ENCODE measurements at regions of chr11 and their contacts with region 1.

Region 1: DNA sequence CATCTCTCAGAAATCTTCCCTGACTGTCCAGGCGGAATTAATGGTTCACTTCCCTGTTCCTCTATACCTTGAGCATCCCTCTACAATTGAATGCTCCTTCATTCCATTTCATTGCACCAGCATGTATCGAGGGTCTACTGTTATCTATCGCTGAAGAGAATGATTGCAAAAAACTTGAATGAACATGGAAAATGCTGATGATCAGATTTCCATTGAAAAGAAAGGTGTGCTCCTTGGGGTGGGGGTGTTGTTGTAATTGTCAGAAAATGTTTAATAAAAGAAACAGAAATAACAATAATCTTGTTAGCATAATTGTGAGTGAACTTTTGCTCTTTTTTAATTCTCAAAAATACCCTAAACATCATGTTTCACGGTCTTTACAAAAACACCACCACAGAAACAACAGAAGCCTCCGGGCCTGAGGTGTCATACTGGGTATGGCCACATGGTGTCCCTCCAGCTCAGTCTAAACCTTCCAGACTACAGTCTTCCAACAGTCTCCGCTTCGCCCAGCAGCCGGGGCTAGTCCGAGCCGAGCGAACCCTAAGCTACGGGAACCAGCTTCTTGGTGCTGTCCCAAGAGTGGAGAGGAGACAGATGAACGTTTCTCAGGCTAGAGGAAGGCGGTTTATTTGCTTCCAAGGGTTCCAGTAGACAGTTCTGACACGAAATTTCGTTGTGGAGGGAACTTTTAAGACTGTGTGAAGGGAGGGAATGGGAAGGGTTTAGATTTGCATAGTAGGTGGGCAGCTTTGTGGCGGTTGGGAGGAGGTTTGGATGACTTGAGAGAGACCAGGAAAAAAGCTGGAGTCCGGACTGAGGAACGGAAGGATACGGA is 75.8 kb upstream of the ZBED5 start:
- DNase-seq: peak; percentile 92 to 95
- H3K4me3 ChIP-seq: peak overlapping the region; percentile 27
- H3K4me3 Mint-ChIP-seq: peak overlapping the region; percentile 85
- H3K27ac Mint-ChIP-seq: peak overlapping the region; percentile 64
- H3K4me1 ChIP-seq: peaks cover 16% of the 10 kb centered on the region
- H3K4me1 Mint-ChIP-seq: peaks cover 22% of the 10 kb centered on the region
- H3K27me3 ChIP-seq: no peaks in the 10 kb centered on the region
- H3K27me3 Mint-ChIP-seq: no peaks in the 10 kb centered on the region
- CTCF ChIP-seq: peak; percentile 93 to 97

Region 2: GRCh38 chr11:10808553-10809372 is 124.9 kb before region 1 on chr11 and contains the start of gene EIF4G2:
- CTCF ChIA-PET with region 1: interaction called, 25 read pairs
- POLR2A ChIA-PET with region 1: interaction called, 39 read pairs
- intact Hi-C with region 1: loop called (anchors 2 kb)
- DNase-seq: peak; percentile 98 to 99
- H3K4me3 ChIP-seq: peak within 1 kb of the TSS; percentile 92
- H3K4me3 Mint-ChIP-seq: peak within 1 kb of the TSS; percentile 98
- H3K27ac Mint-ChIP-seq: peak within 1 kb of the TSS; percentile 97
- H3K4me1 ChIP-seq: peaks cover 11% of the 10 kb centered on the region
- H3K4me1 Mint-ChIP-seq: peaks cover 11% of the 10 kb centered on the region
- H3K27me3 ChIP-seq: no peaks in the 10 kb centered on the region
- H3K27me3 Mint-ChIP-seq: no peaks in the 10 kb centered on the region
- CTCF ChIP-seq: no peak
- total RNA-seq, gene EIF4G2: 1,233 and 1,287 TPM in 2 replicates

Region 3: GRCh38 chr11:10893714-10894151 is 39.9 kb before region 1 on chr11:
- CTCF ChIA-PET with region 1: interaction called, 13 read pairs
- POLR2A ChIA-PET with region 1: interaction called, 4 read pairs
- intact Hi-C with region 1: no loop called
- DNase-seq: peak; percentile 63 to 78
- H3K4me3 ChIP-seq: no peak overlapping the region
- H3K4me3 Mint-ChIP-seq: no peak overlapping the region
- H3K27ac Mint-ChIP-seq: peak overlapping the region; percentile 77
- H3K4me1 ChIP-seq: peaks cover 32% of the 10 kb centered on the region
- H3K4me1 Mint-ChIP-seq: peaks cover 32% of the 10 kb centered on the region
- H3K27me3 ChIP-seq: no peaks in the 10 kb centered on the region
- H3K27me3 Mint-ChIP-seq: no peaks in the 10 kb centered on the region
- CTCF ChIP-seq: peak; percentile 21 to 52

Region 4: DNA sequence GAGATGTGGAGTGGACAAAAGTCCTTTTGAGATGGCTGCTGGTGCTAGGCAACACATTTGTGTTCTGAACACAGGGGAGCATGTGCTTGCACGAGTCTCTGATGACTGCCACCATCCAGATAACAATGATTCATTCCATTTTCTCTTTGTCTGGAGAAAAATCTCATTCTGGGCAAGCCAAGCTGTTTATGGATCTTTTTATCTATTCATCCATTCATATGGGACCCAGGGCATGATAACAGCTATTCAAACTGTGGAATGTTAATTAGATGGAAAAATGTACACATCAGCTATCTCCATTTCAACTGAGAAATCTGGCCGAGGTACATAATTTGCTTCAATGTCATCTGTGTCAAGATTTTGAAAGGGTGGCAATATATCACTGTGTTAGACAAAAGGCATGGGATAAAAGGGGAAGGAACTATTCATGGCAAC is 41.6 kb after region 1 on chr11:
- CTCF ChIA-PET with region 1: interaction called, 39 read pairs
- POLR2A ChIA-PET with region 1: interaction called, 4 read pairs
- intact Hi-C with region 1: loop called (anchors 1 kb)
- DNase-seq: peak; percentile 77 to 80
- H3K4me3 ChIP-seq: no peak overlapping the region
- H3K4me3 Mint-ChIP-seq: peak overlapping the region; percentile 40
- H3K27ac Mint-ChIP-seq: peak overlapping the region; percentile 67
- H3K4me1 ChIP-seq: peaks cover 48% of the 10 kb centered on the region
- H3K4me1 Mint-ChIP-seq: peaks cover 32% of the 10 kb centered on the region
- H3K27me3 ChIP-seq: no peaks in the 10 kb centered on the region
- H3K27me3 Mint-ChIP-seq: no peaks in the 10 kb centered on the region
- CTCF ChIP-seq: no peak

Region 5: DNA sequence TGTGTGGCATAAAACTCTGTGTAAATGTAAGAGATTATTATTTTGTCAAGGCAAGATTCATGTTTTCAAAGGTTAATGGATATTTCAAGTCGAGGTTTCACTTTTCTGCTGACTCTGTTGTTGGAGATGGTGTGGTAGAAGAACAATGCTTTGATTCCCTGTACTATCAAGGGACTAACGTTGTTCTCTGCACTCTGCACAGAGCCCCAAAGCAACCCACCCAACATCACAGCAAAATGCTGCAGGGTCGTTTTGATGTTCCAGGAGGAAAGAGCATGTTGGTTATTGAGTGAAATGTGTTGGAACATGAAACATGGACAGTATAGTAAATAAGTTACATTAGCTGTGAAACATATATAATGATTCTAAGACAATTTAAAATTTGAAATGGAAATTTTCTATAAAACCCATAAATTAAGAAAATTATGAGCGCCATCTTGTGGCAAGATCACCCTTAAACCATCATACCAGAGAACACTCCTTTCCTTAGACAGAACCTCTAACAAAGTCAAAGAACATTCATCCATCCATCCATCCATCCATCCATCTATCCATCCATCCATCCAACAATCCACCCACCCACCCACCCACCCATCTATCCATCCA is 88.6 kb after region 1 on chr11:
- CTCF ChIA-PET with region 1: interaction called, 133 read pairs
- POLR2A ChIA-PET with region 1: interaction called, 5 read pairs
- intact Hi-C with region 1: loop called (anchors 1 kb)
- DNase-seq: peak in 1 of 2 experiments; percentile 29
- H3K4me3 ChIP-seq: no peak overlapping the region
- H3K4me3 Mint-ChIP-seq: no peak overlapping the region
- H3K27ac Mint-ChIP-seq: no peak overlapping the region
- H3K4me1 ChIP-seq: no peaks in the 10 kb centered on the region
- H3K4me1 Mint-ChIP-seq: peaks cover 6% of the 10 kb centered on the region
- H3K27me3 ChIP-seq: no peaks in the 10 kb centered on the region
- H3K27me3 Mint-ChIP-seq: no peaks in the 10 kb centered on the region
- CTCF ChIP-seq: peak; percentile 29 to 67

Region 6: DNA sequence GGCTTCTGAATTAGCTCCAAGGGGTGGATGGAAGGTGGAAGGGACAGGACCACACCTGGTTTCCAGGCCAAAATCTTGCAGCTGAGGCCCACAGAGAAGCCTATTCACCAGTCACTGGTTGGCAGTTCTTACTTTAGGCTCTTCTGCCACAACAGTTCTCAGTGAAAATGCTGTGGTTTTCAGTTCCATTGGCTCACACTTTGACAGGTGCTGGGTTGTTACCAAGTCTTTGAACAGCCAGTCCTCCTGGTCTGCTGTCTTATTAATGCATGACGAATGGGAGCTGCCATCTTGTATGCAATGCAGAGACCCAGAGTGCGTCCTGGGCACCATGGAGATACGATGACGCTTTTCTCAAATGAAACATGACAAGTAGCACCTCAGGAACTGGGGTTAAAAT is 156.1 kb after region 1 on chr11:
- CTCF ChIA-PET with region 1: no interaction called
- POLR2A ChIA-PET with region 1: no interaction called
- intact Hi-C with region 1: no loop called
- DNase-seq: no peak
- H3K4me3 ChIP-seq: no peak overlapping the region
- H3K4me3 Mint-ChIP-seq: no peak overlapping the region
- H3K27ac Mint-ChIP-seq: no peak overlapping the region
- H3K4me1 ChIP-seq: no peaks in the 10 kb centered on the region
- H3K4me1 Mint-ChIP-seq: no peaks in the 10 kb centered on the region
- H3K27me3 ChIP-seq: no peaks in the 10 kb centered on the region; the same call in 1 of the 2 replicates
- H3K27me3 Mint-ChIP-seq: peaks cover 11% of the 10 kb centered on the region
- CTCF ChIP-seq: no peak

Region 7: DNA sequence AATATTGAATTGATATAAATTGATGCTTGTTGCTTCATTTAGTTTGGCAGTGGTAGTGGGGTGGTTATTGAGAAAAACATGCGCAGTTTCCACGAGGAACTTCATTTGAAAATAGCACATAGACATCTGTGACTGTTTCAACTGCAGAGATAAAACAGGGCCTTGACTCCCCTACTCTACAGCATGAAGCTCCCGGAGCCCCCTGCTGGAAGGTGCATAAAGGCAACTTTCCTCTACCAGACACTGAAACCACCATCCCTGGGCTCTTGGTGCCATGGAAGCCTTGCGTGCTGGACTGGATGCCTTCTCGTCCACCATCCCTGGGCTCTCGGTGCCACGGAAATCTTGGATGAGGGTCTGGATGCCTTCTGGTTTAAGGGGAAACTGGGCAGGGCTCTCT is 223.5 kb after region 1 on chr11:
- CTCF ChIA-PET with region 1: interaction called, 6 read pairs
- POLR2A ChIA-PET with region 1: no interaction called
- intact Hi-C with region 1: loop called (anchors 5 kb)
- DNase-seq: peak; percentile 53 to 68
- H3K4me3 ChIP-seq: no peak overlapping the region
- H3K4me3 Mint-ChIP-seq: no peak overlapping the region
- H3K27ac Mint-ChIP-seq: no peak overlapping the region
- H3K4me1 ChIP-seq: no peaks in the 10 kb centered on the region
- H3K4me1 Mint-ChIP-seq: no peaks in the 10 kb centered on the region
- H3K27me3 ChIP-seq: 0 out of 2 replicates have a peak, but pooled peaks cover 1% of the 10 kb centered on the region
- H3K27me3 Mint-ChIP-seq: no peaks in the 10 kb centered on the region
- CTCF ChIP-seq: peak; percentile 64 to 86

Region 8: GRCh38 chr11:11787305-11788062 is 853.8 kb after region 1 on chr11:
- CTCF ChIA-PET with region 1: interaction called, 3 read pairs
- POLR2A ChIA-PET with region 1: no interaction called
- intact Hi-C with region 1: loop called (anchors 2 kb)
- DNase-seq: peak; percentile 69 to 78
- H3K4me3 ChIP-seq: no peak overlapping the region
- H3K4me3 Mint-ChIP-seq: no peak overlapping the region
- H3K27ac Mint-ChIP-seq: no peak overlapping the region
- H3K4me1 ChIP-seq: no peaks in the 10 kb centered on the region
- H3K4me1 Mint-ChIP-seq: no peaks in the 10 kb centered on the region
- H3K27me3 ChIP-seq: no peaks in the 10 kb centered on the region
- H3K27me3 Mint-ChIP-seq: peaks cover 9% of the 10 kb centered on the region
- CTCF ChIP-seq: peak; percentile 76 to 85

Measured in Caco-2 (cell line).